H1 (cell line): ENCODE measurements at regions of chr6 and their contacts with region 1.

Region 1: DNA sequence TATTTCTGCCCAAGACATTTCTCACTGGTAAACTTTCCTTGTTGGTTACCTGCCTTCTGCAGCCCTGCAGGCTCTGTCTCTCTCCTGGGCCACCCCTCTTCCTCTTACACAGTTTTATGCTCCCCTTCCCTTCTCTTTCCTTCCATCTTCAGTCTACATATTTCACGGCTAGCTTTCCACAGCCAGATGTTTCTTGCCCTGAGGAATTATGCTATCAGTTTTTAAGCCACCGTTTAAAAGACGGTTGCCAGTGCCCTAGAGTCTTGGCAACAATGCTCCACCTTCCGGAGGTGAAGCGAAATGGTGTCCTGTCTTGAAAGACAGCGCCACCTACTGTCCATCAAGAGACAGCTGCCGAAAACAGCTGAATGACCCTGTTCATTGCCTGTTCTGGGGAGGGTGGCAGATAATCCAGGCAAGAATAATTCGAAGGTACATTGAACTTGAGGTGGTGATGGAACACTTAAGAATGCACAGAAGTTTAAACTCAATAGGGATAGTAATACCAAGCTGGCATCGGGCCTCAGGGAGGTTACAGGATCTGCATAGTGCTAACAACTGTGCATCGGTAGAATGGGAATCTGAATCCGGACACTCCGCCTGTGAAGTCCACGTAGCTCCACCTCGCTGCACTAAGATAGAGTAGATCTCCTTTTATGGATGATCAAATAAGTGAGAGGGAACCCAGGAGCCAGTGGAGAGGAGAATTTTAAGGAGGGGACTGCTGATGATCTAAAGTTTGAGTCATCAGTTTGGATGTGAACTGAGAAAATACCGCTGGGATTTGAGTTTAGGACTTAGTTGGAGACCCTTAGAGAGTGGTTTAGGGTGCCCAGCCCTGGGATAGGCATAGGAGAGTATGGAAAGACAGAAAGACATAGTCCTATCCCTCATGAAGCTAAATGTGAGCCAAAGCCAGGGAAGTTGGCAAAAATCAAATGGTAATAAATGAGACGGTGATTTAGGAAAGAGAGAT is 4.8 kb upstream of the TRIM40 start:
- DNase-seq: peak in 1 of 2 experiments; percentile 55
- H3K4me3 ChIP-seq: no peak overlapping the region
- H3K27ac ChIP-seq: no peak overlapping the region
- H3K4me1 ChIP-seq: no peaks in the 10 kb centered on the region; a peak in 4 of 7 replicates
- H3K27me3 ChIP-seq: peaks cover 16 to 51% (median 41%) of the 10 kb centered on the region in 4 experiments
- CTCF ChIP-seq: peak; percentile 98 to 100 (median 100)
- EP300 ChIP-seq: no peak
- POLR2A ChIP-seq: no peak
- RAD21 ChIP-seq: peak; percentile 79 to 84

Region 2: DNA sequence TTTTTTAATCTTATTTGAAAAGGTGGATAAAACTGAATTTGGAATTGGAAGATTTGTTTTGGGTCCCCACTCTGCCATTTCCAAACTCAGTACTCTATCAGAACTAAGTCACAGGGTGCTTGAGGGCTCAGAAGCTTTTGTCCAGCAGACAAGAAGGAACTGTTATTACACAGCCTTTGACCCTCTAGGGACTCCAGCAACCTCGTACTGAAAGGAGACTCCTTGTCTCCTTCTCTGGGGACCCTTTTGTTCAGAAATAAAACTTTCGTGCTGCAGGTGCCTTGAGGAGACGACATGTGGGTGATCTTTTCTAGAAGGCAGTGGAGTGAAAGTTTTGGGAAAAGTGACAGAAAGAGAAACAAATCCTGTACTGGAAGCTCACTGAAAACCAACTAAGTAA is 77.5 kb before region 1 on chr6:
- CTCF ChIA-PET with region 1: no interaction called
- POLR2A ChIA-PET with region 1: no interaction called
- DNase-seq: no peak
- H3K4me3 ChIP-seq: no peak overlapping the region
- H3K27ac ChIP-seq: no peak overlapping the region
- H3K4me1 ChIP-seq: no peaks in the 10 kb centered on the region
- H3K27me3 ChIP-seq: no peaks in the 10 kb centered on the region
- CTCF ChIP-seq: no peak
- EP300 ChIP-seq: no peak
- POLR2A ChIP-seq: no peak
- RAD21 ChIP-seq: no peak

Region 3: GRCh38 chr6:30097893-30098768 is 33.0 kb before region 1 on chr6:
- CTCF ChIA-PET with region 1: interaction called, 166 read pairs
- POLR2A ChIA-PET with region 1: interaction called, 17 read pairs
- DNase-seq: no peak
- H3K4me3 ChIP-seq: no peak overlapping the region
- H3K27ac ChIP-seq: no peak overlapping the region
- H3K4me1 ChIP-seq: peaks cover 3 to 12% (median 8%) of the 10 kb centered on the region in 4 experiments; a peak in 6 of 7 replicates
- H3K27me3 ChIP-seq: peaks cover 32 to 56% (median 54%) of the 10 kb centered on the region in 4 experiments
- CTCF ChIP-seq: no peak
- EP300 ChIP-seq: no peak
- POLR2A ChIP-seq: no peak
- RAD21 ChIP-seq: no peak

Region 4: DNA sequence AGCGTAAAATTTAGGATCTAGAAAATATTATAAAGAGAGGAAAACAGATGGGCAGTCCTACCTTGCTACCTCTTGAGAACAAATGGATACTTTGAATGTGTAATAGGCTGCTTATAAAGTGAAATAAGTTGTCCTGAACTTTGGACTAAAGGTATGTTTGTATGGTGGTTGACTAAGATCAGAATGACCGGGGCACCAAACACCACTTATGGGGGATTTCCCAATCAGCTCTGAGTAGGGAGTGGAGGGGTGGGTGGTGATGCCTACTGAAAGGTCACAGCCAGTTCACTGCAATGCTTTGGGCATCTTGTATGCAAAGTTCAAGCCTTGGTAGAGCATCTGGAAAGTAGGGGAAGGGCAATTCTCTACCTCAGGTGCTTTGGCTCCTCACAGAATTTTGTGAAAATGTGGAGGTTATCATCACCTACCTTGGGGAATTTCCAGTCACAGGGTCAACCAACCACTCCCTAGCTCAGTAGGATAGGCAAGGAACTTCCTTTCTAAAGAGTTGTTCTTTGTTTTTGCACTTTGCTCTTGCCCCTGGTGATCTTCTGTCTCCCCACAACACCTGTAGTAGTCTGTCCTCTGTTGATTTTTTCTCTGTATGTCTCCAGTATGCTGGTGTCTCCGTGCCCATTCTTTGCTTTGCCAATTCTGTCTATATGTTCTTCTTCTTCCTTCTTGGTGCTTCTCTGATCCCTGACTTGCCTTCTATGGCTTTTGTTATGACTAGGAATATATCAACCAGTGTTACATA is 18.0 kb before region 1 on chr6 and contains the start of gene TRIM31:
- CTCF ChIA-PET with region 1: interaction called, 166 read pairs
- POLR2A ChIA-PET with region 1: interaction called, 3 read pairs
- DNase-seq: no peak
- H3K4me3 ChIP-seq: no peak within 1 kb of the TSS
- H3K27ac ChIP-seq: no peak within 1 kb of the TSS
- H3K4me1 ChIP-seq: no peaks in the 10 kb centered on the region
- H3K27me3 ChIP-seq: peaks cover 0 to 13% (median 7%) of the 10 kb centered on the region in 4 experiments; a peak in 5 of 7 replicates
- CTCF ChIP-seq: no peak
- EP300 ChIP-seq: no peak
- POLR2A ChIP-seq: no peak
- RAD21 ChIP-seq: no peak
- total RNA-seq, gene TRIM31: not detected in 2 replicates

Region 5: DNA sequence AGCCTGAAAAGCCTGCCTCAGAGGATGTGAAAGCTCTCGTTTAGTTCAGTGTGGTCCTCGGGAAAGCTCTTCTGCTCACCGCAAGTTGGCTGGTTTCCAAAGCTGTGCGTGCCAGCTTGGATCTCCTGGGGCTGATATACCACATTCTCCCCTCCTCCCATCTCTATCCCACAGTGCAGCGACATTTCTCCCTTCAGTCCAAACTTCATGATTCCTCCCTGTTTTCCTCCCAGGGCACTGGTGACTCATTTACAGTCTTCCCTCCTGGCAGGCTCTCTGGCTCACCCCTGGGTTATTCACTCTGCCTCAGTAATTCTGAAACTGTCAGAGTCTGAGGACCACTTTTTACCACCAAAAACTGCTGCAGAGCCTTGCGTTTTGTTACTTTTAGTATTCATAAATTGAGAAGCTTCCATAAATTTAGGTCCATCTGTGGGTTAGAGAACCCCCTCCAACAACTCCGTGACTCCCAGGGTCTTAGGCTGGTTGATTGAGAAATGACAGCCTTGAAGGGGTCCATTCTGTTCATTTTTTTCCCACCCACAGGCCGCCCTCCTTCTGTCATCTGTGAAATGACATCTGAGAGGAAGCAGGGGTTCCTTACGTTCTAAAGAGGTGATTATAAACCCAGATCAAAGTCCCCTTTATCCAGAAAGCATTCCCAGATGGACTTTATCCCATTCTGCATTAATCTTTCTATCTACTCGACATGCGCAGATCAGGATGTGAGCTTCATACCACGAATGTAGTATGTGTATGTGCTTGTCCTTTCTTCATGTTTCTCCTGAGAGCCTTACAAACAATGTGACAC is 23.7 kb after region 1 on chr6:
- CTCF ChIA-PET with region 1: interaction called, 50 read pairs
- POLR2A ChIA-PET with region 1: no interaction called
- DNase-seq: no peak
- H3K4me3 ChIP-seq: no peak overlapping the region
- H3K27ac ChIP-seq: no peak overlapping the region
- H3K4me1 ChIP-seq: no peaks in the 10 kb centered on the region
- H3K27me3 ChIP-seq: peaks cover 0 to 4% (median 1%) of the 10 kb centered on the region in 4 experiments; a peak in 4 of 7 replicates
- CTCF ChIP-seq: no peak
- EP300 ChIP-seq: no peak
- POLR2A ChIP-seq: no peak
- RAD21 ChIP-seq: no peak

Region 6: GRCh38 chr6:30169658-30170614 is 38.8 kb after region 1 on chr6:
- CTCF ChIA-PET with region 1: interaction called, 29 read pairs
- POLR2A ChIA-PET with region 1: no interaction called
- DNase-seq: no peak
- H3K4me3 ChIP-seq: no peak overlapping the region
- H3K27ac ChIP-seq: no peak overlapping the region
- H3K4me1 ChIP-seq: peaks cover 0 to 4% (median 3%) of the 10 kb centered on the region in 4 experiments; a peak in 4 of 7 replicates
- H3K27me3 ChIP-seq: peaks cover 7 to 32% (median 26%) of the 10 kb centered on the region in 4 experiments
- CTCF ChIP-seq: peak in 2 of 3 experiments; percentile 68 to 81; a peak in 3 of 4 replicates
- EP300 ChIP-seq: no peak
- POLR2A ChIP-seq: no peak
- RAD21 ChIP-seq: peak; percentile 82 to 83